ENCODE measurements at regions of chr16 and their contacts with region 1.

Region 1: DNA sequence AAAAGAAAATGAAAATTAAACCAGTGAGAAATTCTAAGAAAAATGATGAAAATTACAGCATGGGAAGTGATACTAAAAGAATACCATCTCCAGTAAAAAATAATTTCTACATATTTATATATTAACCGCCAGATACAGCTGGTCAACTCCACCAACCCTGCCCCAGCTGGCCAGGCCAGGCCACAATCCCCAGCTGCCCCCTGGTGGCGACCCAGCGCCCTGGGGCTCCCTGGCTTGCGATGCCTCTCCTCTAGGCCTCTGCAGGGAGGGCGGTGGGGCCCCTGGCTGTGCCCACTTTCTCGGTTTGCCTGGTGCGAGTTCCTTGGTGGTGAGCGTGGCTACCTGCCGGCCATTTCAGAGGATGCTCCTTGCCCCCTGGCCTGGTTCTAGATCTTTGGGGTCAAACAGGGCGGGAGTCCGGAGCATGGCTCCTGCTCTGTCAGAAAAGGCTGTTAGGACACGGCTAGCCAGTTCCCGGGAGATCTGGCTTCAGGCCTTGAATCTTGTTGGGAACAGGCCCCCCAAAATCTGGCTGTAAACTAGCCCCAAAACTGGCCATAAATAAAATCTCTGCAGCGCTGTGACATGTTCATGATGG is 14.5 kb downstream of the GLIS2 start:
- DNase-seq: peak; percentile 39 to 82 (median 58)
- ATAC-seq: peak; percentile 80
- H3K4me3 ChIP-seq: no peak overlapping the region
- H3K4me3 Mint-ChIP-seq: no peak overlapping the region
- H3K27ac ChIP-seq: no peak overlapping the region
- H3K27ac Mint-ChIP-seq: peak overlapping the region in 1 of 9 donors; percentile 40
- H3K4me1 ChIP-seq: peaks cover 0 to 3% of the 10 kb centered on the region in 2 donors
- H3K4me1 Mint-ChIP-seq: peaks cover 0 to 4% (median 0%) of the 10 kb centered on the region in 7 donors
- H3K27me3 ChIP-seq: no peaks in the 10 kb centered on the region
- H3K27me3 Mint-ChIP-seq: peaks cover 0 to 15% (median 0%) of the 10 kb centered on the region in 5 donors

Region 2: DNA sequence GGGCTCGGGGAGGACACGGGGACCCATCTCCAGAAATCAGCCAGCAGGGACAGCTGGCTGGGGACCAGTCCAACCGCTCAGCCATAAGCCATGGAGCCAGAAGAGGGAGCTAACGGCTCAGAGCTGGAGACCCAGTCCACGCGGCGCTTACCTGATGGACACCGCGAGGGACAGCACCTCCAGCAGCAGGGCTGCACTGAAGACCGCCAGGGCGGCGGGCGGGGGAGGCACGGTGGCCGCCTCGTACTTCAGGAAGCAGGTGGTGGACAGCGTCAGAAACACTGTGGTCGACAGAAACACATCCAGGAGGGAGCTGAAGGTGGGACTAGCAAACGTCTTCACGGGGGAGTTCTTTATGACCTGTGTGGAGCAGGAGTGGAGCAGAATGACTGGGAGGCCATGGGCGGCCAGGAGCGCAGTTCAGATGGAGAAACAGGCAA is 347.3 kb before region 1 on chr16:
- CTCF ChIA-PET with region 1: no interaction called
- POLR2A ChIA-PET with region 1: no interaction called
- intact Hi-C with region 1: loop called in 1 of 2 experiments (anchors 2 kb)
- DNase-seq: peak in 7 of 9 donors; percentile 23 to 48 (median 27)
- ATAC-seq: peak; percentile 82
- H3K4me3 ChIP-seq: no peak overlapping the region
- H3K4me3 Mint-ChIP-seq: peak overlapping the region in 1 of 10 donors; percentile 37
- H3K27ac ChIP-seq: no peak overlapping the region
- H3K27ac Mint-ChIP-seq: peak overlapping the region in 2 of 9 donors; percentile 20 to 36
- H3K4me1 ChIP-seq: no peaks in the 10 kb centered on the region
- H3K4me1 Mint-ChIP-seq: peaks cover 0 to 10% (median 7%) of the 10 kb centered on the region in 7 donors
- H3K27me3 ChIP-seq: no peaks in the 10 kb centered on the region
- H3K27me3 Mint-ChIP-seq: no peaks in the 10 kb centered on the region

Region 3: GRCh38 chr16:4038448-4038847 is 291.9 kb before region 1 on chr16:
- CTCF ChIA-PET with region 1: no interaction called
- POLR2A ChIA-PET with region 1: no interaction called
- intact Hi-C with region 1: no loop called
- DNase-seq: no peak
- ATAC-seq: no peak
- H3K4me3 ChIP-seq: no peak overlapping the region
- H3K4me3 Mint-ChIP-seq: no peak overlapping the region
- H3K27ac ChIP-seq: no peak overlapping the region
- H3K27ac Mint-ChIP-seq: no peak overlapping the region
- H3K4me1 ChIP-seq: no peaks in the 10 kb centered on the region
- H3K4me1 Mint-ChIP-seq: peaks cover 0 to 4% (median 0%) of the 10 kb centered on the region in 7 donors
- H3K27me3 ChIP-seq: no peaks in the 10 kb centered on the region
- H3K27me3 Mint-ChIP-seq: no peaks in the 10 kb centered on the region

Region 4: GRCh38 chr16:4261557-4262172 is 68.7 kb before region 1 on chr16:
- CTCF ChIA-PET with region 1: interaction called, 3 read pairs
- POLR2A ChIA-PET with region 1: no interaction called
- intact Hi-C with region 1: loop called in 1 of 2 experiments (anchors 1 kb)
- DNase-seq: peak in 8 of 9 donors; percentile 18 to 63 (median 30)
- ATAC-seq: peak; percentile 60
- H3K4me3 ChIP-seq: no peak overlapping the region
- H3K4me3 Mint-ChIP-seq: no peak overlapping the region
- H3K27ac ChIP-seq: no peak overlapping the region
- H3K27ac Mint-ChIP-seq: peak overlapping the region in 2 of 9 donors; percentile 15 to 69
- H3K4me1 ChIP-seq: no peaks in the 10 kb centered on the region
- H3K4me1 Mint-ChIP-seq: peaks cover 0 to 13% (median 8%) of the 10 kb centered on the region in 7 donors
- H3K27me3 ChIP-seq: no peaks in the 10 kb centered on the region
- H3K27me3 Mint-ChIP-seq: no peaks in the 10 kb centered on the region

Region 5: GRCh38 chr16:4271176-4272066 is 59.0 kb before region 1 on chr16:
- CTCF ChIA-PET with region 1: interaction called, 3 read pairs
- POLR2A ChIA-PET with region 1: interaction called, 15 read pairs
- intact Hi-C with region 1: no loop called
- DNase-seq: peak; percentile 68 to 90 (median 84)
- ATAC-seq: peak; percentile 89
- H3K4me3 ChIP-seq: peak overlapping the region; percentile 99
- H3K4me3 Mint-ChIP-seq: peak overlapping the region; percentile 85 to 97 (median 92)
- H3K27ac ChIP-seq: peak overlapping the region; percentile 58
- H3K27ac Mint-ChIP-seq: peak overlapping the region; percentile 67 to 98 (median 83)
- H3K4me1 ChIP-seq: peaks cover 5 to 13% of the 10 kb centered on the region in 2 donors
- H3K4me1 Mint-ChIP-seq: peaks cover 8 to 23% (median 15%) of the 10 kb centered on the region in 7 donors
- H3K27me3 ChIP-seq: no peaks in the 10 kb centered on the region
- H3K27me3 Mint-ChIP-seq: no peaks in the 10 kb centered on the region